ENCODE measurements at regions of chr5 and their contacts with region 1.

Region 1: GRCh38 chr5:528625-529511 is 4.6 kb upstream of the SLC9A3 start:
- DNase-seq: no peak
- ATAC-seq: no peak
- H3K4me3 ChIP-seq: no peak overlapping the region
- H3K27ac ChIP-seq: no peak overlapping the region
- H3K4me1 ChIP-seq: no peaks in the 10 kb centered on the region
- H3K27me3 ChIP-seq: peaks cover 8% of the 10 kb centered on the region
- CTCF ChIP-seq: no peak

Region 2: DNA sequence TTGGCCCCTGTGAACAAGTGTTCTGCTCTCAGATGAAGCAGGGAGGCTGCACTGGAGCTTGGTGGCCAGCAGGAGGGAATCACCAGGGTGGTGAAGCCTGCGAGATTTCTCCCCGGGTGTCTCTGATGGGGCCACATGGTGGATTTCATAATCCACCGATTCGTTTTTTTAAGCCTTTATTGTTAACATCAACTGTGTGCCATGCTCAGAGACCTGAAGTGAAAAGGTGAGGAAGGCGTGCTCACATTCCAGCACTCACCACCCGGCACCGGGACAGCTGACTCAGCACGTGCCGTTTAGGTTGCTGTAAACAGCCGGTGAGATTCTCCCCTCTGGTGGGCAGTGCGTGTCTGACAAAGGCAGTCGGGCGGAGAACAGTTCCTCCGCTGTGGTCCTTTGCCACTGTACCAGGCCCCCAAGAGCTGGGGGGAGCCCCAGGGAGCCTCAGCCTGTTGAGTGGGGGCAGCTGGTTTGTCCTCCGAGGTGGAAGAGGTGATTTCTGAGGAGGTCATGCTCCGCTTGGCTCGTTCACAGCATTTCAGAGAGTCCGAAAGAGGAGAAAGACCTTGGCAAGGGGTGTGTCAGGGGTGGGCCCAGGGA is 220.1 kb before region 1 on chr5:
- CTCF ChIA-PET with region 1: no interaction called
- POLR2A ChIA-PET with region 1: no interaction called
- in situ Hi-C with region 1: no loop called
- intact Hi-C with region 1: no loop called
- DNase-seq: no peak
- ATAC-seq: peak; percentile 66
- H3K4me3 ChIP-seq: no peak overlapping the region
- H3K27ac ChIP-seq: no peak overlapping the region
- H3K4me1 ChIP-seq: peaks cover 24% of the 10 kb centered on the region
- H3K27me3 ChIP-seq: no peaks in the 10 kb centered on the region
- CTCF ChIP-seq: no peak

Region 3: GRCh38 chr5:493119-493701 is 35.7 kb before region 1 on chr5:
- CTCF ChIA-PET with region 1: no interaction called
- POLR2A ChIA-PET with region 1: no interaction called
- in situ Hi-C with region 1: no loop called
- intact Hi-C with region 1: no loop called
- DNase-seq: no peak
- ATAC-seq: 0 out of 2 replicates have a peak, but pooled peaks have one; percentile 9
- H3K4me3 ChIP-seq: no peak overlapping the region
- H3K27ac ChIP-seq: no peak overlapping the region
- H3K4me1 ChIP-seq: no peaks in the 10 kb centered on the region
- H3K27me3 ChIP-seq: no peaks in the 10 kb centered on the region
- CTCF ChIP-seq: no peak

Region 4: DNA sequence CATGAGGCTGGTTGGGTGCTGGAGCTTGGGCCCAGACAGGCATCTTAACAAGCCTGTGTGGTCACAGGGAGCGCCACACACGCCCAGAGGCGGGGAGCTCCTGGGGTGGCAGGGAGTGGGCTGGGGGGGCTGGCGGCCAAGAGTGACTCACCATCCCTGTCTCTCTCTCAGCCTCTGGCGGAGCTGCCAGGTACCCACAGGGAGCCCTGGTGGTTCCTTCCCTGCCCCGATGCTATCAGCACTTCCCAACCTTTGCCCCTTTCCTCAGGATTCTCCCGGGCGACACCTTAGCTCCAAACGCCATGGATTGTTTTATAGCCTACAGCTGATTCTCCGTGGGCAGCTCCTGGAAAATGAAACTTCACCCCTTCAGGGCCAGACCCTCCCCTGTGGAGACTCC is 10.1 kb before region 1 on chr5:
- CTCF ChIA-PET with region 1: interaction called, 14 read pairs
- POLR2A ChIA-PET with region 1: no interaction called
- in situ Hi-C with region 1: no loop called
- intact Hi-C with region 1: no loop called
- DNase-seq: no peak
- ATAC-seq: no peak
- H3K4me3 ChIP-seq: no peak overlapping the region
- H3K27ac ChIP-seq: no peak overlapping the region
- H3K4me1 ChIP-seq: 0 out of 2 replicates have a peak, but pooled peaks cover 2% of the 10 kb centered on the region
- H3K27me3 ChIP-seq: peaks cover 3% of the 10 kb centered on the region
- CTCF ChIP-seq: no peak

Measured in Panc1 (cell line).